CD8-positive, alpha-beta memory T cell (primary cell): ENCODE measurements at regions of chr2 and their contacts with region 1.

Region 1: DNA sequence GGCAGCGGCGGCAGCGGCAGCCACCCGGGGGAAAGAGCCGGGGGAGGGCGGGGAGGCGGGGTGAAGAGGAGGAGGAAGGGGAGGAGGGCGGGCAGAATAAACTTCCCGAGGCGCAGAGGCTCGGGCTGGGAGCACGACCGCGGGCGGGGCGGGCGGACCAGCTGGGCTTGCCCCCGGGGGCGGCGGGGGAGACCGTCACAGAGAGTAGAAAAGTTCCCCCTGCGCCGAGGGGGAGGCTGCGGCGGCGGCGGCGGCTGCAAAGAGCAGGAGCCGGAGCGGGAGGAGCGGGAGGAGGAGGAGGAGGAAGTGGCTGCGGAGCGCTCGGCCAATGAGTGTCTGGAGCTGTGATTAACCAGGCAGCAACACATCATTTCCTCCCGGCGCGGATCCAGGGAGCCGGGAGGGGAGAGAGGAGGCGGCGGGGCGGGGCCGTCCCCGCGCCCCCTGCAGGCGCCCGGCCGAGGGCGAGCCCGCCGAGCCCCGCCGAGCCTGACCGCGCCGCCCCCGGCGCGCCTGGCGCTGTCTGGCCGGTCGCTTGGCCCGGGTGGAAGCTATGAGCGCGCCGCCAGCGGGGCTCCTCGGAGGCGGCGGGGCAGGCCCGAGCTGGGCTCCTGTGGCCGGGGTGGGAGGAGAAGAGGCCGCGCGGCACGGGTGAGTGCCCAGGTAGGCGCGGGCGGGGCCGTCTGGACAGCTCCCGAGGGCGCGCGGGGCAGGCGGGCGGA is at the start of gene ACVR1:
- DNase-seq: peak; percentile 74 to 86 (median 78)
- H3K4me3 ChIP-seq: peak within 1 kb of the TSS; percentile 83
- H3K4me3 Mint-ChIP-seq: peak within 1 kb of the TSS; percentile 92 to 98 (median 95)
- H3K27ac ChIP-seq: peak within 1 kb of the TSS; percentile 66
- H3K27ac Mint-ChIP-seq: peak within 1 kb of the TSS; percentile 85 to 96 (median 94)
- H3K4me1 ChIP-seq: peaks cover 30% of the 10 kb centered on the region
- H3K4me1 Mint-ChIP-seq: peaks cover 45 to 71% (median 66%) of the 10 kb centered on the region in 3 donors
- H3K27me3 ChIP-seq: no peaks in the 10 kb centered on the region
- H3K27me3 Mint-ChIP-seq: no peaks in the 10 kb centered on the region
- total RNA-seq, gene ACVR1: 14.8 to 18.3 TPM

Region 2: DNA sequence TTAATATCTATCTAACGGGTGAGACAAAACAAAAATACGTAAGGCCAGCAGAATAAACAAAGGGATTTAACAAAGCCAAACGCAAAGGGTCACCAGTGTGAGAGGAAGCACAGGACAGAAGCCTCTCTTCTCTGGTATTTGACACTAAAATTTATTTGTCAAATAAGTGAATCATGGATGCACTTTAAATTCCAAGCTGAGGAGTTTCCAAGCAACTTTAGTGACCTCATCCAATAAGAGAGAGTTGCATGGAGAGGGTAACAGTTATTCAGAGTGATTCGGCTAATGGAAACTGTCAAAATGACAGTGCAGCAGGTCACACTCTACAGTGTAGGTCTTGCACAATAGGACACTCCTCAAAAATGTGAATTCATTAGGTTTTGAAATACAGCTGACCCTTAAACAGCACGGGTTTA is 143.7 kb before region 1 on chr2:
- CTCF ChIA-PET with region 1: no interaction called
- POLR2A ChIA-PET with region 1: no interaction called
- DNase-seq: no peak
- H3K4me3 ChIP-seq: no peak overlapping the region
- H3K4me3 Mint-ChIP-seq: no peak overlapping the region
- H3K27ac ChIP-seq: no peak overlapping the region
- H3K27ac Mint-ChIP-seq: no peak overlapping the region
- H3K4me1 ChIP-seq: no peaks in the 10 kb centered on the region
- H3K4me1 Mint-ChIP-seq: no peaks in the 10 kb centered on the region
- H3K27me3 ChIP-seq: no peaks in the 10 kb centered on the region
- H3K27me3 Mint-ChIP-seq: no peaks in the 10 kb centered on the region

Region 3: DNA sequence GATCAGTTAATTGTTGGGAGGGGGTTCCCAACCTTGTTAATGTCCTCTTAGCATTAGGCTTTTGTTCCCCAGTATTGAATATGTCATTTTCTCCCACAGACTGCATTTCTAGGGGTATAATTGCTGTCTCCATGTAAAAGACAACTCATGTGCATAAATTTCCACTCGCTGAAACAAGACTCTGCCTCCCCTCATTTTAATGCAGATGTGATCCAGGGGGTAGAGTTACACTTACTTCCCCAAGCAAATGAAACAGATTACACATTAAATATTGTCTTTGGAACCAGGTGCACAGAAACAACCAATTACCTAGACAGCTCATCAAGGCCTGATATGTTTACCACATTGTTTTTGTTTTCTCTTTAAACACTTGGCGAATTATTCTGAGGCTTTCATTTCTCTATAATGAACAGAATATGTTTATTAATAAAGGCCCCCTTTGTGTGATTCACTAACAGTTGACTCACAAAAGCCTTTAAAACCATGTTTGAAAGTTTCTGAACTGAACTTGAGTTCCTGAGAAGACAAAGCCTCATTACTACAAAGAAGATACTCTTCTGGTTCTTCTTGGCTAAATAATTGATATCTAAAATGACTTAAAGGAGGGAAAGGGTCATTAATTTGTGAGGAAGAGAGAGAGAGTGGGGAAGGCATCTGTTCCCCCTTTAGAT is 14.9 kb after region 1 on chr2:
- CTCF ChIA-PET with region 1: interaction called, 20 read pairs
- POLR2A ChIA-PET with region 1: interaction called, 8 read pairs
- DNase-seq: no peak
- H3K4me3 ChIP-seq: peak overlapping the region; percentile 33
- H3K4me3 Mint-ChIP-seq: peak overlapping the region in 6 of 7 donors; percentile 2 to 74 (median 34)
- H3K27ac ChIP-seq: no peak overlapping the region
- H3K27ac Mint-ChIP-seq: peak overlapping the region in 7 of 8 donors; percentile 0 to 91 (median 70)
- H3K4me1 ChIP-seq: peaks cover 44% of the 10 kb centered on the region
- H3K4me1 Mint-ChIP-seq: peaks cover 28 to 68% (median 61%) of the 10 kb centered on the region in 3 donors
- H3K27me3 ChIP-seq: no peaks in the 10 kb centered on the region
- H3K27me3 Mint-ChIP-seq: no peaks in the 10 kb centered on the region

Region 4: GRCh38 chr2:157898591-157898996 is 22.4 kb after region 1 on chr2:
- CTCF ChIA-PET with region 1: interaction called, 58 read pairs
- POLR2A ChIA-PET with region 1: interaction called, 33 read pairs
- DNase-seq: peak in 3 of 5 donors; percentile 19 to 73 (median 28)
- H3K4me3 ChIP-seq: no peak overlapping the region
- H3K4me3 Mint-ChIP-seq: peak overlapping the region; percentile 46 to 91 (median 86)
- H3K27ac ChIP-seq: peak overlapping the region; percentile 45
- H3K27ac Mint-ChIP-seq: peak overlapping the region; percentile 79 to 100 (median 99)
- H3K4me1 ChIP-seq: peaks cover 67% of the 10 kb centered on the region
- H3K4me1 Mint-ChIP-seq: peaks cover 58 to 78% (median 76%) of the 10 kb centered on the region in 3 donors
- H3K27me3 ChIP-seq: no peaks in the 10 kb centered on the region
- H3K27me3 Mint-ChIP-seq: no peaks in the 10 kb centered on the region

Region 5: DNA sequence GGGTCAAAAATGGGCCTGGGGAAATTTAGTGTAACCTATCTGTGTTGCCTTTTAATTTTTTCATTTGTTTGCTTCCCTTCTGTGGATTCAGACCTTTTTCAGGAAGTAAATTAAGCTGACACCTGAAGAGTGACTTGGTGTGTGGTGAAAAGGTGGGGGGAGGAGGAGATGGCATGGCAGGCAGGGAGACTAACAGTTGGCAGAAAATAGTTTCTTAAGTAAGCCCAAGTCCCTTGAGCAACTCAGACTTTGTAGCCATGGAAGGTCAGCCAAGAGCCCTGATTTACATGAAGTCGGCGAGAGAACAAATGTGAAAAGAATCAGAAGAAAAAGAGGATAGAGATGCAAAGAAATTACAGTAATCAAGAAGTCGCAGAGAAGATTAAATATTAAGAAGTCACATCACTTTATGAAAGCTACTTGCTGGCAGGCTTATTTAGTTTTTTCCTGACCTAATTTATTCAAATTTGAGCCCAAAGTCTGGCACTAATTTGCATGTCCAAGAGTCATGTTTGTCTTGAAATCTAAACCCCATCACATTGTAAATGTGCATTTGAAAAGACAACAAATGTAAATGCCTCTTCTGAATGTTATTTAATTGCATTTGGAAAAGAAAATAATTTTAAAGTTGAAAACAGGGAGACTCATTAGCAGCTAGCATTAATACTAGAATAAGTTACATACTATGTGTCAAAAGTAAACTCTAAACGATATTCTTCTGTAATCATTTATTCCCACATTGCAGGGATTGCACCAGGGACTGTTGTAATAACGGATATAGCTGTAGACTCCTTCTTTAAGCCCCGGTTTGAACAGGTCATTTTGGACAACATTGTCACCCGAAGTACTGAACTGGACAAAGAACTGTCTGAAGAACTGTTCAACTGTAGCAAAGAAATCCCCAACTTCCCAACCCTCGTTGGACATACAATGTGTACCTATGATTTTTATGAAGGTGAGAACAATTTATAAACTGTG is 244.7 kb after region 1 on chr2:
- CTCF ChIA-PET with region 1: no interaction called
- POLR2A ChIA-PET with region 1: no interaction called
- DNase-seq: no peak
- H3K4me3 ChIP-seq: no peak overlapping the region
- H3K4me3 Mint-ChIP-seq: no peak overlapping the region
- H3K27ac ChIP-seq: no peak overlapping the region
- H3K27ac Mint-ChIP-seq: no peak overlapping the region
- H3K4me1 ChIP-seq: no peaks in the 10 kb centered on the region
- H3K4me1 Mint-ChIP-seq: no peaks in the 10 kb centered on the region
- H3K27me3 ChIP-seq: no peaks in the 10 kb centered on the region
- H3K27me3 Mint-ChIP-seq: peaks cover 4 to 5% of the 10 kb centered on the region in 2 donors